MCF 10A (cell line): ENCODE measurements at regions of chr16 and their contacts with region 1.

Region 1: GRCh38 chr16:79601931-79602627 is 1.5 kb upstream of the MAF start:
- DNase-seq: peak; percentile 86
- H3K4me3 Mint-ChIP-seq: peak overlapping the region; percentile 84
- H3K27ac Mint-ChIP-seq: no peak overlapping the region
- H3K4me1 Mint-ChIP-seq: peaks cover 14% of the 10 kb centered on the region
- H3K27me3 Mint-ChIP-seq: no peaks in the 10 kb centered on the region
- CTCF ChIP-seq: peak; percentile 77

Region 2: GRCh38 chr16:78122774-78123315 is 1479.2 kb before region 1 on chr16:
- CTCF ChIA-PET with region 1: interaction called, 15 read pairs
- POLR2A ChIA-PET with region 1: no interaction called
- intact Hi-C with region 1: loop called (anchors 5 kb)
- DNase-seq: peak; percentile 75
- H3K4me3 Mint-ChIP-seq: no peak overlapping the region
- H3K27ac Mint-ChIP-seq: no peak overlapping the region
- H3K4me1 Mint-ChIP-seq: peaks cover 6% of the 10 kb centered on the region
- H3K27me3 Mint-ChIP-seq: no peaks in the 10 kb centered on the region
- CTCF ChIP-seq: peak; percentile 51

Region 3: DNA sequence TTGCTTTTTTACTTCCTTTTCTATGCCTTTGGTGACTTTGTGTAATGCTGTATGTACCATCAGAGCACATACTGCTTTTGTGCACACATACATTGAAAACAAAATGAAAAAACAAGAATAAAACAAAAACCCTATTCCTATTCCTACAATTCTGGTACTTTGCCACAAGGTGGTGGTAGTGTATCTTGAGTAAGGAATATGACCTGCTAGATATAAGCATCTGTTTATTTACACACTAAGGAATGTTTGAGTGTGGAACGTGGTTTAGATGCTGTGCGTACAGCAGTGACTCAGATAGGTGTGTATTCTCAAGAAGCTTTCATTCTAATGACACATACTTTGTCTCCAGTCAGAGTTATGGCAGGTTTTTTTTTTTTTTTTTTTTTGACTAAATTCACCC is 896.4 kb before region 1 on chr16:
- CTCF ChIA-PET with region 1: interaction called, 4 read pairs
- POLR2A ChIA-PET with region 1: interaction called, 4 read pairs
- intact Hi-C with region 1: loop called (anchors 5 kb)
- DNase-seq: peak; percentile 55
- H3K4me3 Mint-ChIP-seq: no peak overlapping the region
- H3K27ac Mint-ChIP-seq: no peak overlapping the region
- H3K4me1 Mint-ChIP-seq: peaks cover 6% of the 10 kb centered on the region
- H3K27me3 Mint-ChIP-seq: no peaks in the 10 kb centered on the region
- CTCF ChIP-seq: peak; percentile 61

Region 4: GRCh38 chr16:79047229-79047983 is 554.7 kb before region 1 on chr16:
- CTCF ChIA-PET with region 1: no interaction called
- POLR2A ChIA-PET with region 1: no interaction called
- intact Hi-C with region 1: loop called (anchors 5 kb)
- DNase-seq: peak; percentile 25
- H3K4me3 Mint-ChIP-seq: no peak overlapping the region
- H3K27ac Mint-ChIP-seq: peak overlapping the region; percentile 3
- H3K4me1 Mint-ChIP-seq: peaks cover 6% of the 10 kb centered on the region
- H3K27me3 Mint-ChIP-seq: no peaks in the 10 kb centered on the region
- CTCF ChIP-seq: peak; percentile 50

Region 5: DNA sequence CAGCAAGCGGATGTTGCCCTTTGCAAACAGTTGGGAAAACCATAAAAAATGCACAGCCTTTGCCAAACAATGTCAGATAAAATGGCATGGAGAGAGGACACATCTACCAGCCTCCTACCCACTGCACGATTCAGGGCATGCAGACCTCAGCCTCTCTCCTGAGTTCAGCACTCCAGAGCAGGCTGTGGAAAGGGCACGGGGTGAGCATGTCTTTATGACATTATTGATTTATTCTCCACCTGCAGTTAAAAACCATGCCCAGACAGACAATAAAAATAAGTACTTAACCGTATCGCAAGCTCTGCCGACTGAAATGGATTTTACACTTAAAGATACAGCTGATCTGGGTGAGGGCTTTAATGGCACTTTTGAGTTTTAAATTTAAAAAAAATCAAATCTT is 128.6 kb before region 1 on chr16:
- CTCF ChIA-PET with region 1: no interaction called
- POLR2A ChIA-PET with region 1: no interaction called
- intact Hi-C with region 1: no loop called
- DNase-seq: no peak
- H3K4me3 Mint-ChIP-seq: no peak overlapping the region
- H3K27ac Mint-ChIP-seq: no peak overlapping the region
- H3K4me1 Mint-ChIP-seq: no peaks in the 10 kb centered on the region
- H3K27me3 Mint-ChIP-seq: peaks cover 45% of the 10 kb centered on the region
- CTCF ChIP-seq: no peak

Region 6: GRCh38 chr16:79751471-79752184 is 149.5 kb after region 1 on chr16:
- CTCF ChIA-PET with region 1: interaction called, 10 read pairs
- POLR2A ChIA-PET with region 1: interaction called, 8 read pairs
- intact Hi-C with region 1: loop called (anchors 5 kb)
- DNase-seq: peak; percentile 79
- H3K4me3 Mint-ChIP-seq: peak overlapping the region; percentile 17
- H3K27ac Mint-ChIP-seq: peak overlapping the region; percentile 9
- H3K4me1 Mint-ChIP-seq: peaks cover 39% of the 10 kb centered on the region
- H3K27me3 Mint-ChIP-seq: no peaks in the 10 kb centered on the region
- CTCF ChIP-seq: no peak

Region 7: DNA sequence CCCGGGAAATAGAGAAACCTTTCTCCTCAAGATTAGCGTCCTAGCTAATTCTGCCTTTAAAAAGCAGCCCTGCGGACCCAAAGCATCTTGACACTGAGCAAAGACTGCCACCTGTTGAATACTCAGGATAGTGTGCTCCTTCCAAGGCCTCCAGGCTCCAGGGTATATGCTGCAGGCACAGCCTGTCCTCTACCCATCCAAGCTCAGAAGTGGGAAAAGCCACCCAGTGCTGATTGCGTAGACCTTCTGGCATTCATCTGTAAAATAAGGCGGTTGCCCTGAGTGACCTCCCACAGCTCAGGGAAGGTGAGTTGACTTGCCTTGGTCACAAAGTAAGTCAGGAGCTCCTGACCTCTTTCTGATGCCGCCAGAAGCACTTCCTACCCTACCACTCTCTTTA is 482.6 kb after region 1 on chr16:
- CTCF ChIA-PET with region 1: interaction called, 4 read pairs
- POLR2A ChIA-PET with region 1: interaction called, 3 read pairs
- intact Hi-C with region 1: loop called (anchors 2 kb)
- DNase-seq: peak; percentile 61
- H3K4me3 Mint-ChIP-seq: no peak overlapping the region
- H3K27ac Mint-ChIP-seq: no peak overlapping the region
- H3K4me1 Mint-ChIP-seq: peaks cover 6% of the 10 kb centered on the region
- H3K27me3 Mint-ChIP-seq: no peaks in the 10 kb centered on the region
- CTCF ChIP-seq: peak; percentile 48

Region 8: DNA sequence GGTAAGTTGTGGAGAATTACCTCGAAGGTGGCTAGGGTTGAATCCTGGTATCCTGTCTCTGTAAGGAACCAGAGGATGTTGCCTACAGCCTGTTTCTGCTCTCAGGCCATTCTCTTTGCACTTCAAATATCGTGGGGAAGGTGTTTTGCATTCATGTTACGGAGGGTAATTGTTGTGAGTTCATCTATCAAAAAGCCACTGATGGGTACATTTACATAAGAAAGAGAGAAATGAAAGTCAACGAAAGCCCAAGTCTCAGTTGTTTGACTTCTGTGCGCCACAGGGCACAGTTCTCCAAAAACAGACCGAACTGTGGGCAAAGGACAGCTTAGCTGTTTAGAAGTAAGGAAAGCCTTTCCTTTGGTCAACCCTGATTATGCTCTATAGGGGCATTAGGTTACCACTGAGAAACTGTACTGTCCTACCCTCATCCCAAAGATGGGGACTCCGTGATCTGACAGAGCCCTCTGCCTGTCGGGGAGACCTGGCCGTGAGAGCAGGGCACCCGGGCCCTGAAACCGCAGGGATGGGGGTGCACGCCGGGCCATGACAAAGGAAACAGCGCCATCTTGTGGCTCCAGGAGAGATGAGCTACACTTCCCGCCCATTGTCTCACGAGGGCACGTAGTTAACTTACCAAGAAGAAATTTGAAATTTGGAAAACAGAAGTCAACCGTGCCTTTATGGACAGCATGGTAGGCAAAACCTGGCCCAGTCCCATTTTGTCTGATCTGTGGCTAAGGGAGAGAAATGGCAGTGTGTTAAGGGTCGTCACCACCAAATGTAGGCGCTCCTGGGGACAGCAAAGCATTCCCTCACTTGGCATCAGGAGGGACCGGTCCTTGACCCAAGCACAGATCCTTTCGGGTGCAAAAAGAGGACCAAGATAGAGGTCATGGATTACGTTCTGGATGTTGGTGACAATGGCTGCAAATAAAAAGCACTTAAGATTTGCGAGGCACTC is 864.2 kb after region 1 on chr16:
- CTCF ChIA-PET with region 1: interaction called, 3 read pairs
- POLR2A ChIA-PET with region 1: no interaction called
- intact Hi-C with region 1: loop called (anchors 1 kb)
- DNase-seq: peak; percentile 68
- H3K4me3 Mint-ChIP-seq: no peak overlapping the region
- H3K27ac Mint-ChIP-seq: no peak overlapping the region
- H3K4me1 Mint-ChIP-seq: peaks cover 10% of the 10 kb centered on the region
- H3K27me3 Mint-ChIP-seq: peaks cover 14% of the 10 kb centered on the region
- CTCF ChIP-seq: peak; percentile 88